ENCODE measurements at regions of chr20 and their contacts with region 1.

Region 1: DNA sequence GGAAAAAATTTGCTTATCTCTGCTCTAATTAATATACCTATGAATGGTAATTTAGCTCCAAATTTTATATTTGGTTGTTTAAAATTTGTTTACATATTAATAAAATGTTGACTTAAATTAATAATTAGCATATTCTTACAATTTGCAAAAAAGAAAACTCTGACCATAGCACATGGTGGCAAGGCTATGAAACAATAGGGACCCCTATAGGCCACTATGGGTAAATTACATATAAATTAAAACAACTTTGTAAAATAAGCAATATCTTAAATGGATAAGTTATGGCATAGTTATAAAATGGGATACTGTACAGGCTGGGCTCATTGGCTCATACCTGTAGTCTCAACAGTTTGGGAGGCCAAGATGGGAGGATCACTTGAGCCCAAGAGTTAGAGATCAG is 76.0 kb downstream of the MKKS start:
- DNase-seq: no peak
- H3K4me3 ChIP-seq: no peak overlapping the region
- H3K27me3 ChIP-seq: no peaks in the 10 kb centered on the region
- CTCF ChIP-seq: peak; percentile 50

Region 2: DNA sequence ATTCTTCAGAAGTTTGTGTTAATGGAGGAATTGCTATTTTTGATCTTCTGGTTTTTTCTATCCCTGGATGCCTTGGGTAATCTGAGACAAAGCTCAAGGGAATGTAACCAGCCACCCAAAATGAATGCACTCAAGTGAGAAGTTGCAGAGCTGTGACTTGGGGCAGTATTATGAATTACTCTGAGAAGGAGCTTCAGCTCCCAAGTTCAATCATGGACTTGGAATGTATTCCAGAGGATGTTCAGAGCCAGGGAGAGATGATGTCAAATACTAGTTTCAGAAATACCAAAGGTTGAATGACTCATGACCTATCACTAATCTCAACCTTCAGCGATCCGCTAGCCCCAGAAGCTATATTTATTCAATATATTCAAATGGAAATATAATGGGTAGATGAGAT is 1664.3 kb before region 1 on chr20:
- CTCF ChIA-PET with region 1: no interaction called
- POLR2A ChIA-PET with region 1: no interaction called
- DNase-seq: peak; percentile 69
- H3K4me3 ChIP-seq: no peak overlapping the region
- H3K27me3 ChIP-seq: no peaks in the 10 kb centered on the region
- CTCF ChIP-seq: no peak

Region 3: DNA sequence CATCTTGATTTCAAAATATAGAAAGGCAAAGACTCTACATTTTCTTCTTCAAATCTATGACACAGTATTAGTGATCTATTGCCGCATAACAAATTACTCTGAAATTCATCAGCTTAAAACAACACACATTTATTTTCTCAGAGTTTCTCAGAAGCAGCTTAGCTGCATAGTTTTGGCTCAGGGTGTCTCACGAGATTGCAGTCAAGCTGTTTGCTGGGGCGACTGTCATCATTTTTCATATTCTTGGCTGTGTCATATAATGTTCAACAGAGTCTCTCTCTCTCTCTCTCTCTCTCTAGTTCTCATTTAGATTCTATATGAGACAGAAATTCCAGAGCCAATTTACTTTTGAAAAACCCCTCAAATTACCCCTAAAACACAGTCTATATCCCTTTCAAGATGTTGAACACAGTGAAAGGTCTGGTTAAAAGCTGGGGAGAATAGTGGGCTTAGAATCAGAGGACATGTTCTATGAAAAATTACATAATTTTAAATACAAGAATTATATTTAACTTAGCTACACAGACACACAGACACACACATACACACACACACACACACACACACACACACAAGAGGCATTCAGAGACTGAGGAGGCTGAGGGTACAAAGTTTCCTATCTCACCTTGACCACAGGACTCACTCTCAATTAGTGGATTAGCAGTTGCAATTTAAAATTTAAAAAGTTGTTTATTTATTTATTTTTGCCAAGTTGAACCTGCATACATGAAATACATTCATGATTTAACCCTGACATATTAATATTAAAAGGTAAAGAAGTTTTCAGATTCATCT is 10.7 kb before region 1 on chr20:
- CTCF ChIA-PET with region 1: interaction called, 10 read pairs
- POLR2A ChIA-PET with region 1: no interaction called
- DNase-seq: no peak
- H3K4me3 ChIP-seq: no peak overlapping the region
- H3K27me3 ChIP-seq: 0 out of 2 replicates have a peak, but pooled peaks cover 2% of the 10 kb centered on the region
- CTCF ChIP-seq: no peak

Region 4: DNA sequence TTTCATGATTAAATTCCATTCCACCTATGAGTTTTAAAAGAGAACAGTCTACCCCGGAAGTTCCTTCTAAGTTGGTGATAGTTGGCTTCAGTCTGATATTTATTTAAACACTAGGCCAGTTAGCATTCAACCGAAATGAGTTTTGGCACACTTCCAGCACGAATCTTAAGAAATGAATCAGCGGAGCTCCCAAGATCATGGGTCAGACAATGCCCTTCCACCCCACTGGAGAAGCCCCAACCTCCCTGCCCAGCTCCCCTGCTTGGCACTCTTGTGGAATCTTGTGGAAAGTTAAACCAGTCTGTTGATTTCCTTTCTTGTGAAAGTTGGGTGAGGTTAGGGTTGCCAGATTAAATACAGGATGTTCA is 11.7 kb after region 1 on chr20:
- CTCF ChIA-PET with region 1: interaction called, 16 read pairs
- POLR2A ChIA-PET with region 1: no interaction called
- DNase-seq: no peak
- H3K4me3 ChIP-seq: no peak overlapping the region
- H3K27me3 ChIP-seq: no peaks in the 10 kb centered on the region
- CTCF ChIP-seq: no peak

Region 5: GRCh38 chr20:10447027-10447426 is 89.1 kb after region 1 on chr20:
- CTCF ChIA-PET with region 1: no interaction called
- POLR2A ChIA-PET with region 1: no interaction called
- DNase-seq: peak; percentile 36
- H3K4me3 ChIP-seq: no peak overlapping the region
- H3K27me3 ChIP-seq: no peaks in the 10 kb centered on the region
- CTCF ChIP-seq: no peak